B cell (primary cell): ENCODE measurements at regions of chr20 and their contacts with region 1.

Region 1: GRCh38 chr20:3786665-3787323 is at the start of gene CENPB:
- DNase-seq: peak; percentile 91
- ATAC-seq: peak; percentile 96
- H3K4me3 ChIP-seq: peak within 1 kb of the TSS; percentile 46 to 62 (median 59)
- H3K4me3 Mint-ChIP-seq: peak within 1 kb of the TSS; percentile 89
- H3K27ac ChIP-seq: peak within 1 kb of the TSS; percentile 16 to 56
- H3K27ac Mint-ChIP-seq: peak within 1 kb of the TSS; percentile 88
- H3K4me1 ChIP-seq: peaks cover 8 to 18% of the 10 kb centered on the region in 2 donors
- H3K4me1 Mint-ChIP-seq: peaks cover 30% of the 10 kb centered on the region
- H3K27me3 ChIP-seq: no peaks in the 10 kb centered on the region
- H3K27me3 Mint-ChIP-seq: no peaks in the 10 kb centered on the region
- CTCF ChIP-seq: peak; percentile 88
- total RNA-seq, gene CENPB: 43.7 and 46.4 TPM in 2 replicates

Region 2: GRCh38 chr20:3470627-3471396 is 316.0 kb before region 1 on chr20 and contains the start of gene ATRN:
- CTCF ChIA-PET with region 1: no interaction called
- POLR2A ChIA-PET with region 1: no interaction called
- intact Hi-C with region 1: no loop called
- DNase-seq: peak; percentile 94
- ATAC-seq: peak; percentile 92
- H3K4me3 ChIP-seq: peak within 1 kb of the TSS; percentile 49 to 88 (median 72)
- H3K4me3 Mint-ChIP-seq: peak within 1 kb of the TSS; percentile 90
- H3K27ac ChIP-seq: peak within 1 kb of the TSS; percentile 46 to 72
- H3K27ac Mint-ChIP-seq: peak within 1 kb of the TSS; percentile 88
- H3K4me1 ChIP-seq: peaks cover 25 to 35% of the 10 kb centered on the region in 2 donors
- H3K4me1 Mint-ChIP-seq: peaks cover 36% of the 10 kb centered on the region
- H3K27me3 ChIP-seq: peaks cover 0 to 2% (median under 1%) of the 10 kb centered on the region in 4 experiments
- H3K27me3 Mint-ChIP-seq: peaks cover 6% of the 10 kb centered on the region
- CTCF ChIP-seq: no peak
- total RNA-seq, gene ATRN: 18.3 and 19.5 TPM in 2 replicates

Region 3: GRCh38 chr20:3727401-3728021 is 59.3 kb before region 1 on chr20:
- CTCF ChIA-PET with region 1: no interaction called
- POLR2A ChIA-PET with region 1: no interaction called
- intact Hi-C with region 1: no loop called
- DNase-seq: no peak
- ATAC-seq: no peak
- H3K4me3 ChIP-seq: no peak overlapping the region
- H3K4me3 Mint-ChIP-seq: no peak overlapping the region
- H3K27ac ChIP-seq: no peak overlapping the region
- H3K27ac Mint-ChIP-seq: no peak overlapping the region
- H3K4me1 ChIP-seq: no peaks in the 10 kb centered on the region
- H3K4me1 Mint-ChIP-seq: peaks cover 5% of the 10 kb centered on the region
- H3K27me3 ChIP-seq: peaks cover 0 to 34% (median 5%) of the 10 kb centered on the region in 4 experiments
- H3K27me3 Mint-ChIP-seq: peaks cover 49% of the 10 kb centered on the region
- CTCF ChIP-seq: no peak

Region 4: DNA sequence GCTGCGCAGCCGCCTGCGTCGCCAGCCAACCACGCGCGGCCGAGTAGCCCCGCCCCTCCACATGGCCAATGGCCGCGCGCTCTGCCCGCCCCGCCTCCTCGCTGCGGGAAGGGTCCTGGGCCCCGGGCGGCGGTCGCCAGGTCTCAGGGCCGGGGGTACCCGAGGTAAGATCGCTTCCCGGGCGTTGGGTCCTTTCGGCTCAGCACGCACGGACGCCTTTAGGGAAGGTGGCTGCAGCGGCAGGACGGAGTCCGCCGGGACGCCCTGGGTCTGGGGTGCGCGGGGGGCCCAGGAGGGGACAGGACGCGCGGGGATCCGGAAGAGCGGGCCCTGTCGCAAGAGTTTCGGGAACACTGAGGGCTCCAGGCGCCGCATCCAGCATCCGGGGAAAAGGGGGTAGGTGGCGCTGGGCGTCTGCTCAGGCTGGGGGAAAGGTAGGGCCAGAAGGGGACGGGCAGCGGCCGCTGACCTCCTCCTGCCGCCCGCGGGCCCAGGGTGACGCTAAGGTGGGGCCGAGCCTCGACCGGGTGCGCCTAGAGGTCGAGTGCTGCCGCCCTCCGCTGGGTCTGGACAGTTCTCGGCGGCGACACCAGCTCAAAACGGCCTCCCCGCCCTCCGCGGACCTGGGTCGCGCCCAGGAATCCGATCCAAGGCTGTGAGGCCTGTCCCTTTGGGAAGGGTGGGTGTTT is 60.1 kb after region 1 on chr20 and contains the start of gene MAVS:
- CTCF ChIA-PET with region 1: interaction called, 4 read pairs
- POLR2A ChIA-PET with region 1: no interaction called
- intact Hi-C with region 1: loop called (anchors 2 kb)
- DNase-seq: peak; percentile 88
- ATAC-seq: peak; percentile 98
- H3K4me3 ChIP-seq: peak within 1 kb of the TSS; percentile 59 to 93 (median 86)
- H3K4me3 Mint-ChIP-seq: peak within 1 kb of the TSS; percentile 90
- H3K27ac ChIP-seq: peak within 1 kb of the TSS; percentile 63 to 86
- H3K27ac Mint-ChIP-seq: peak within 1 kb of the TSS; percentile 87
- H3K4me1 ChIP-seq: peaks cover 8 to 18% of the 10 kb centered on the region in 2 donors
- H3K4me1 Mint-ChIP-seq: peaks cover 32% of the 10 kb centered on the region
- H3K27me3 ChIP-seq: no peaks in the 10 kb centered on the region
- H3K27me3 Mint-ChIP-seq: no peaks in the 10 kb centered on the region
- CTCF ChIP-seq: no peak
- total RNA-seq, gene MAVS: 52.2 and 53.3 TPM in 2 replicates

Region 5: GRCh38 chr20:3901028-3901705 is 114.4 kb after region 1 on chr20:
- CTCF ChIA-PET with region 1: no interaction called
- POLR2A ChIA-PET with region 1: no interaction called
- intact Hi-C with region 1: no loop called
- DNase-seq: no peak
- ATAC-seq: peak; percentile 28
- H3K4me3 ChIP-seq: peak overlapping the region in 1 of 5 experiments; percentile 25
- H3K4me3 Mint-ChIP-seq: peak overlapping the region; percentile 55
- H3K27ac ChIP-seq: peak overlapping the region; percentile 29 to 72
- H3K27ac Mint-ChIP-seq: peak overlapping the region; percentile 54
- H3K4me1 ChIP-seq: peaks cover 40 to 52% of the 10 kb centered on the region in 2 donors
- H3K4me1 Mint-ChIP-seq: peaks cover 71% of the 10 kb centered on the region
- H3K27me3 ChIP-seq: no peaks in the 10 kb centered on the region
- H3K27me3 Mint-ChIP-seq: no peaks in the 10 kb centered on the region
- CTCF ChIP-seq: no peak

Region 6: DNA sequence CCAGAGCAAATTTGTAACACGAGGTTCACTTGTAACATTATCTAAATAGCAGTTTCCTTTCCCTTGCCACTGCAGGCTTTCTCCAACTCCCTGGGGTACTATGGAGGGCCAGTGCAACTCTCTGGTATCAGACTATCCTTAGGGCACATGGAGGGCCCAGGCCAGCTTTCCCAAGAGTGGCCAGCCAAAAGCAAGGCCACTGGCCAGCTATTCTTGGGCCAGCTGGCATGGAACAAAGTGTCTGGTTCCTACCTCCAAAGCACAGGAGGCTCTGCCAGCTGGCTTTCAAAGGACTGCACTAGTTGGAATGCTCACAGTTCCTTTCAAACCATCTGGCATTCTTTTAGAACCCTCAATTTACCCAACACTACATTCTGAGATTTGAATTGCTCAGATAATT is 219.8 kb after region 1 on chr20:
- CTCF ChIA-PET with region 1: no interaction called
- POLR2A ChIA-PET with region 1: no interaction called
- intact Hi-C with region 1: no loop called
- DNase-seq: no peak
- ATAC-seq: no peak
- H3K4me3 ChIP-seq: no peak overlapping the region
- H3K4me3 Mint-ChIP-seq: no peak overlapping the region
- H3K27ac ChIP-seq: no peak overlapping the region
- H3K27ac Mint-ChIP-seq: no peak overlapping the region
- H3K4me1 ChIP-seq: no peaks in the 10 kb centered on the region
- H3K4me1 Mint-ChIP-seq: no peaks in the 10 kb centered on the region
- H3K27me3 ChIP-seq: no peaks in the 10 kb centered on the region
- H3K27me3 Mint-ChIP-seq: no peaks in the 10 kb centered on the region
- CTCF ChIP-seq: no peak